ENCODE measurements at regions of chr17 and their contacts with region 1.

Region 1: GRCh38 chr17:35257208-35257659 is 14.4 kb downstream of the SLFN5 start:
- H3K4me3 ChIP-seq: no peak overlapping the region
- H3K27ac ChIP-seq: no peak overlapping the region
- H3K4me1 ChIP-seq: peaks cover 22% of the 10 kb centered on the region
- CTCF ChIP-seq: no peak

Region 2: DNA sequence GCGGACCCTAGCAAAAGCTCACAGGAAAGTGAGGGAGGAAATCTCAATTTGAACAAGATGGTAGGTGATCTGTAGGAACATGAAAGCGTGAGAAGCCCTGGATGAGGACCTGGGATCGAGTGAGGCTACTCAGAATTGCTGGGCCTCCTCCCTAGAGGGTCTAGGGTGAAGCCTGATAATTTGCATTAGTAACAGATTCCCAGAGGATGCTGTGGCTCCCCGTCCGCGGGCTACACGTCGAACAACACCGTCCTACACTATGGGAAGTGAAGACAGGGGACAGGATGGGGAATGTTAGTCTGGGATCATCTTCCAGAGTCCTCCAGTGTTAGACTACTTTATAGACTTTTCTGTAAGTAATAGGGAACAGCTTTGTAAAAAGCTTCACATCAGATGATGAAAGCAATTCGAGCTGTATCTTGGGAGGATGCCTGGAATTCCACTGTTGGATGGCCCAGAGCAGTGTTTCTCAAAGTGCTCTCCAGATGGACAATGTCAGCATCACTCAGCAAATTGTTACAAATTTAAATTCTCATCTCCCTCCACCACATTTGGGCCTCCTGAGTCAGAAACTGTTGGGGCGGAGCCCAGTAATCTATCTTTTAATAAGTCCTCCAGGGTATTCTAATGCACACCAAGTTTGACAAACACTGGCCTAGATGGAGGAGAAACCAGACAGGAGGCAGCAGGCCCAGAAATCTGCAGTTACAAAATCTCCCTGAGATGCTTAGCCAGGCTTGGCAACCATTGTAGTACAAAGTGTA is 129.3 kb before region 1 on chr17:
- CTCF ChIA-PET with region 1: no interaction called
- POLR2A ChIA-PET with region 1: no interaction called
- H3K4me3 ChIP-seq: no peak overlapping the region
- H3K27ac ChIP-seq: no peak overlapping the region
- H3K4me1 ChIP-seq: no peaks in the 10 kb centered on the region
- CTCF ChIP-seq: no peak

Region 3: DNA sequence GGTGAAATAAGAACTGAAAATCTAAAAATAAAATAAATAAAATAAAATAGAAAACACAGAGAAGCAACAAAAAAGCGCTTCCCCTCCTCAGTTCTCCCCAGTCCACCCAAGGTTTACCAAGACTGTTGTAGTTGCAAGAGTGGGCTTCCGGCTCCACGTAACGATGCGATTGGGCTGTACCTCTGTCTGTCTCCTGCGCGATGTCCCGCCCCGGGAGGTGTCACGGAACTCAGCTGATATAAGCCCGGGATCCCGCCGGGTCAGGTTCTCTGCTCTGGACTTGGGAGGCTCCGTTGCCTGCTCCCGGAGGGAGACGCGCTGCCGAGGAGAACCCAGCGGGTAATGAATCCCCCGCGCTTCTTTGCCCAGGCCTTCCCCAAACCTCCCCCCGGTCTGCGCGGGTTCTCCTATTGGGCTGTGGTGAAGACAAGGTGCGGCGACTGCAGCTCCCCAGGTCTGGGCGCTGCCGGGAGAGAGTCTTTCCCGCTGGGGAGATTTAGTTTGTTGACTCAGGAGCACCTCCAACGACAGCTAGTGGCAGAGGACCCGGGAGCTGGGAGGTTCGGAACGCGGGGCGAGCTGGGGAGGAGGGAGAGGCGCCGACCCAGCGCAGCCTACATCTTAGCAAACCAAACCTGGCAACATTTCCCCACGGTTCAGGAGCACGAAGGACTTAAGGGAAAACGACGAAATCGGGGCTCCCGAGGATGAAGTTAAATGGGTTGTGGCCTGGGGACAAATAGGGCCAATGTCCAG is 14.3 kb before region 1 on chr17 and contains the start of gene SLFN5:
- CTCF ChIA-PET with region 1: interaction called, 8 read pairs
- POLR2A ChIA-PET with region 1: interaction called, 27 read pairs
- H3K4me3 ChIP-seq: peak within 1 kb of the TSS; percentile 76
- H3K27ac ChIP-seq: peak within 1 kb of the TSS; percentile 93
- H3K4me1 ChIP-seq: peaks cover 23% of the 10 kb centered on the region
- CTCF ChIP-seq: peak; percentile 37

Region 4: GRCh38 chr17:35555695-35556094 is 298.5 kb after region 1 on chr17:
- CTCF ChIA-PET with region 1: no interaction called
- POLR2A ChIA-PET with region 1: no interaction called
- H3K4me3 ChIP-seq: no peak overlapping the region
- H3K27ac ChIP-seq: no peak overlapping the region
- H3K4me1 ChIP-seq: no peaks in the 10 kb centered on the region
- CTCF ChIP-seq: no peak